Activated T-helper 2 cell treated with anti-CD3 and anti-CD28 coated beads, Interferon-gamma antibody, Interleukin-2, Interleukin-4, amounts not matched to agents 10 μg/mL and 5 μg/mL and 100 μg/mL, durations not matched to agents 14 hours and 24 hours and 36 hours (primary cell): ENCODE measurements at regions of chr17 and their contacts with region 1.

Region 1: GRCh38 chr17:51260125-51260880 is at the start of gene UTP18:
- DNase-seq: peak; percentile 94
- H3K4me3 Mint-ChIP-seq: peak within 1 kb of the TSS; percentile 88
- H3K27ac Mint-ChIP-seq: peak within 1 kb of the TSS; percentile 97
- H3K4me1 Mint-ChIP-seq: peaks cover 49% of the 10 kb centered on the region
- H3K27me3 Mint-ChIP-seq: no peaks in the 10 kb centered on the region
- total RNA-seq, gene UTP18: 75.7 and 78.7 TPM in 2 replicates

Region 2: DNA sequence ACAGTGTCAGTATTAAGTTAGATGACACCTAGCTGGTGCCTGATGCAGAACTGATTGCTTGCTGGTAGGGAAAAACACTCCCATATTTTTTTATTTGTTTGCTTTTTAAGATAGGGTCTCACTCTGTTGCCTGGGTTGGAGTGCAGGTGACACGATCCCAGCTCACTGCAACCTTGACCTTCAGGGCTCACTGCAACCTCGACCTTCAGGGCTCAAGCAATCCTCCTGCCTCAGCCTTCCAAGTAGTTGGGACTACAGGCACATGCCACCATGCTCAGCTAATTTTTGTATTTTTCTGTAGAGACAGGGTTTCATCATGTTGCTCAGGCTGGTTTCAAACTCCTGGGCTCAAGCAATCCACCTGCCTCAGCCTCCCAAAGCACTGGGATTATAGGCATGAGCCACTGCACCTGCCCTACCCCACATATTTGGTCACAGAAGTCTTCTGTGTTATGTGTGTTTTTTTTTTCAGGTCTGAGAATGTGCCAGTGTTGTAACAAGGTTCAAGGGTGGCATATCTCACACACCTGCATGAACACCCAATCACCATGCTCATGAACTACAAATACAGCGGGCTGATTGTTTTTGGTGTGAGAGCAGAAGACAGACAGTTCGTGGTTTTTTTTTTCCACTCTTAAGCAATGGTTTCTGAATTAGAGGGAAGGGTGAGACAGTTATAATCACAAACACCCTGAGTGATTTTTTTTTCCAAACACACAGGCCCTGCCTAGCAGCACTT is 162.4 kb before region 1 on chr17:
- intact Hi-C with region 1: no loop called
- DNase-seq: no peak
- H3K4me3 Mint-ChIP-seq: no peak overlapping the region
- H3K27ac Mint-ChIP-seq: no peak overlapping the region
- H3K4me1 Mint-ChIP-seq: peaks cover 24% of the 10 kb centered on the region
- H3K27me3 Mint-ChIP-seq: no peaks in the 10 kb centered on the region

Region 3: GRCh38 chr17:51166197-51166986 is 93.9 kb before region 1 on chr17 and contains the start of gene NME2:
- intact Hi-C with region 1: loop called (anchors 5 kb)
- DNase-seq: peak; percentile 68
- H3K4me3 Mint-ChIP-seq: peak within 1 kb of the TSS; percentile 89
- H3K27ac Mint-ChIP-seq: peak within 1 kb of the TSS; percentile 90
- H3K4me1 Mint-ChIP-seq: peaks cover 26% of the 10 kb centered on the region
- H3K27me3 Mint-ChIP-seq: no peaks in the 10 kb centered on the region
- total RNA-seq, gene NME2: 708 and 735 TPM in 2 replicates

Region 4: GRCh38 chr17:51427856-51428255 is 167.6 kb after region 1 on chr17:
- intact Hi-C with region 1: loop called (anchors 10 kb)
- DNase-seq: peak; percentile 60
- H3K4me3 Mint-ChIP-seq: peak overlapping the region; percentile 10
- H3K27ac Mint-ChIP-seq: peak overlapping the region; percentile 61
- H3K4me1 Mint-ChIP-seq: peaks cover 50% of the 10 kb centered on the region
- H3K27me3 Mint-ChIP-seq: no peaks in the 10 kb centered on the region